ENCODE measurements at regions of chr12 and their contacts with region 1.

Region 1: GRCh38 chr12:108697905-108698304 is 33.4 kb downstream of the CORO1C start:
- DNase-seq: no peak
- H3K4me3 ChIP-seq: no peak overlapping the region
- H3K27ac ChIP-seq: peak overlapping the region; percentile 84 to 94 (median 88)
- H3K4me1 ChIP-seq: peaks cover 16 to 50% (median 25%) of the 10 kb centered on the region in 4 donors
- H3K27me3 ChIP-seq: no peaks in the 10 kb centered on the region
- CTCF ChIP-seq: no peak
- EP300 ChIP-seq: no peak
- POLR2A ChIP-seq: no peak

Region 2: GRCh38 chr12:108712165-108712924 is 14.4 kb after region 1 on chr12:
- in situ Hi-C with region 1: no loop called
- intact Hi-C with region 1: loop called (anchors 1 kb)
- DNase-seq: no peak
- H3K4me3 ChIP-seq: no peak overlapping the region
- H3K27ac ChIP-seq: peak overlapping the region; percentile 15 to 51 (median 42)
- H3K4me1 ChIP-seq: peaks cover 6 to 66% (median 36%) of the 10 kb centered on the region in 4 donors
- H3K27me3 ChIP-seq: no peaks in the 10 kb centered on the region
- CTCF ChIP-seq: no peak
- EP300 ChIP-seq: no peak
- POLR2A ChIP-seq: no peak

Measured in transverse colon (tissue), 4 donors.